ENCODE measurements at regions of chr19 and their contacts with region 1.

Region 1: DNA sequence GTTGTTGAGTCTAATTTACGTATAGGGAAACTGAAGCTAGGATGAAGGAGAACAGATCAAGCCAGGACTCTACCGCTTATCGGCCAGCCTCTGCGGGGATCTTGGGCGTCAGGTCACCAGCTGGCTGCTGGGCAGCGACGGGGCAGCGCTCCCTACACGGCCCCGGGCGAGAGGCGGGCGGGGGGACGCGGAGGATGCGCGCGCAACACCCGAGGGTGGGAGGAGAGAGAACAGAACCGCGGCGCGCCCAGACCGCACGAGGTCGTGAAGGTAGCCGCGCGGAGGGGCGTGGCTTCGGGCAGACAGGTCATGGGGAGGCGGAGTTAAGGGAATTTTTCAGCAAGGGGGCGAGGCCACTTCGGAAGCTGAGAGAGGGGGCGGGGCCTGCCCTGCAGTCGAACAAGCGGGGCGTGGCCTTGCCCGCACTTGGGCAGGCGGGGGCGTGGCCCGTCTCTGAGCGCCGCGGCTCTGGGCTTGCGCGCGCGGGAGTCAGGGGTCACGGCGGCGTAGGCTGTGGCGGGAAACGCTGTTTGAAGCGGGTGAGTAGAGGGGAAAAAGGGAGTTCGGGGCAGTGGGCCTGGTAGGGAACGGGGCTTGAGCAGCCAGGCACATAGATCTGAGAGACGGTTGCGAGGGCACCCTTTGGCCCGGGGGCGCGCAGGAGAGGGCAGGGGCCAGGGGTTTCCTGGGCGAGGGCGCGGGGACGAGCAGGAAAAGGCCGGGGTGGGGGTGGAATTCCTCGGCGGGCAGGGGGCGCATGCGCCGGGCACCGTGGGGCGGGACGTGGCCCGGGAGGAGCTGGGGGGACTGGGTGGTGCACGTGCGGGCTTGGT is at the start of gene POLD1:
- DNase-seq: peak; percentile 98
- total RNA-seq, gene POLD1: 8.0 TPM

Region 2: DNA sequence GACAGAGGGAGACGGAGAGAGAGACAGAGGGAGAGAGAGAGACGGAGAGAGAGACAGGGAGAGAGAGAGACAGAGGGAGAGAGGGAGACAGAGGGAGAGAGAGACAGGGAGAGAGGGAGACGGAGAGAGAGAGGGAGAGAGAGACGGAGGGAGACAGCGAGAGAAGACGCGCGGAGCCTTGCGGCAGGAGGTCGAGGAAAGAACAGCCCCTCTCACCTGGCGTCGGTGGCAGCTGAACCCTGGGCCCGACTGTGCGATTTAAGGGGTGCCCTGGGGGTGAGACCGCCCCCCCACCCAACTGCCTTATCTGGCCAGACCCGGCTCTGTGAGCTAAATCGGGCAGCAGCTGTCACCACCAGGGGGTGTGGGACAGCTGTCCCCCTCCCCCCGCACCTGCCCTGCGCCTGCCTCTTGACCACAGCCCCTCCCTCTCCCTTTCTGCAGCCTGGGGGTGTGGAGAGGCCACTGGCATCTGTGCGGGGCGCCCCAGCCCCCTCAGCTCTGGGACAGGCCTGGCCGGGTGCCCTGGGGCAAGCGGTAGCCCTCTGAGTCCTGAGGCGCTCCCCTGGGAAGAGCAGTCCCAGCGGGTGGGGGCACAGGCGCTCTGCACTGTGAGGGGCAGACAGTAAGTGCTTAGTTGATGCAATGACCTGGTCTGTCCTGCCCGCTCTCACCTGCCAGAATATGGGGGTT is 116.1 kb after region 1 on chr19:
- intact Hi-C with region 1: no loop called
- DNase-seq: peak; percentile 90

Region 3: GRCh38 chr19:50511068-50511822 is 127.2 kb after region 1 on chr19 and contains the start of gene JOSD2:
- intact Hi-C with region 1: loop called (anchors 1 kb)
- DNase-seq: peak; percentile 98
- total RNA-seq, gene JOSD2: 36.1 TPM